RWPE1 (cell line): ENCODE measurements at regions of chr20 and their contacts with region 1.

Region 1: GRCh38 chr20:1503564-1504227 is 12.5 kb upstream of the SIRPB2 start:
- DNase-seq: peak; percentile 86
- H3K27ac ChIP-seq: no peak overlapping the region
- CTCF ChIP-seq: peak; percentile 99

Region 2: GRCh38 chr20:910870-911770 is 592.6 kb before region 1 on chr20:
- CTCF ChIA-PET with region 1: no interaction called
- POLR2A ChIA-PET with region 1: no interaction called
- DNase-seq: no peak
- H3K27ac ChIP-seq: no peak overlapping the region
- CTCF ChIP-seq: no peak

Region 3: GRCh38 chr20:1466211-1467081 is 37.2 kb before region 1 on chr20 and contains the start of gene NSFL1C:
- CTCF ChIA-PET with region 1: interaction called, 46 read pairs
- POLR2A ChIA-PET with region 1: no interaction called
- DNase-seq: peak; percentile 98
- H3K27ac ChIP-seq: peak within 1 kb of the TSS; percentile 82
- CTCF ChIP-seq: peak; percentile 99

Region 4: GRCh38 chr20:1474825-1475603 is 28.7 kb before region 1 on chr20:
- CTCF ChIA-PET with region 1: interaction called, 21 read pairs
- POLR2A ChIA-PET with region 1: no interaction called
- DNase-seq: peak; percentile 85
- H3K27ac ChIP-seq: peak overlapping the region; percentile 21
- CTCF ChIP-seq: no peak; the same call in 1 of the 2 replicates